MCF 10A (cell line): ENCODE measurements at regions of chr22 and their contacts with region 1.

Region 1: GRCh38 chr22:20156611-20157429 is 6.0 kb upstream of the CCDC188 start:
- DNase-seq: peak; percentile 66
- H3K4me3 Mint-ChIP-seq: no peak overlapping the region
- H3K27ac Mint-ChIP-seq: no peak overlapping the region
- H3K4me1 Mint-ChIP-seq: no peaks in the 10 kb centered on the region
- H3K27me3 Mint-ChIP-seq: no peaks in the 10 kb centered on the region
- CTCF ChIP-seq: peak; percentile 99

Region 2: GRCh38 chr22:20238536-20238900 is 81.7 kb after region 1 on chr22:
- CTCF ChIA-PET with region 1: interaction called, 8 read pairs
- POLR2A ChIA-PET with region 1: no interaction called
- intact Hi-C with region 1: loop called (anchors 2 kb)
- DNase-seq: peak; percentile 39
- H3K4me3 Mint-ChIP-seq: no peak overlapping the region
- H3K27ac Mint-ChIP-seq: no peak overlapping the region
- H3K4me1 Mint-ChIP-seq: no peaks in the 10 kb centered on the region
- H3K27me3 Mint-ChIP-seq: no peaks in the 10 kb centered on the region
- CTCF ChIP-seq: peak; percentile 44

Region 3: GRCh38 chr22:20268279-20269012 is 111.6 kb after region 1 on chr22 and contains the start of gene RTN4R:
- CTCF ChIA-PET with region 1: interaction called, 3 read pairs
- POLR2A ChIA-PET with region 1: no interaction called
- intact Hi-C with region 1: loop called (anchors 1 kb)
- DNase-seq: peak; percentile 58
- H3K4me3 Mint-ChIP-seq: peak within 1 kb of the TSS; percentile 59
- H3K27ac Mint-ChIP-seq: peak within 1 kb of the TSS; percentile 61
- H3K4me1 Mint-ChIP-seq: no peaks in the 10 kb centered on the region
- H3K27me3 Mint-ChIP-seq: no peaks in the 10 kb centered on the region
- CTCF ChIP-seq: peak; percentile 63
- total RNA-seq, gene RTN4R: 2.7 and 3.7 TPM in 2 replicates

Region 4: GRCh38 chr22:20283674-20284066 is 126.8 kb after region 1 on chr22:
- CTCF ChIA-PET with region 1: interaction called, 51 read pairs
- POLR2A ChIA-PET with region 1: interaction called, 4 read pairs
- intact Hi-C with region 1: loop called (anchors 1 kb)
- DNase-seq: no peak
- H3K4me3 Mint-ChIP-seq: no peak overlapping the region
- H3K27ac Mint-ChIP-seq: no peak overlapping the region
- H3K4me1 Mint-ChIP-seq: no peaks in the 10 kb centered on the region
- H3K27me3 Mint-ChIP-seq: peaks cover 11% of the 10 kb centered on the region
- CTCF ChIP-seq: no peak

Region 5: GRCh38 chr22:20456064-20456721 is 299.4 kb after region 1 on chr22:
- CTCF ChIA-PET with region 1: no interaction called
- POLR2A ChIA-PET with region 1: no interaction called
- intact Hi-C with region 1: loop called (anchors 2 kb)
- DNase-seq: peak; percentile 63
- H3K4me3 Mint-ChIP-seq: no peak overlapping the region
- H3K27ac Mint-ChIP-seq: no peak overlapping the region
- H3K4me1 Mint-ChIP-seq: no peaks in the 10 kb centered on the region
- H3K27me3 Mint-ChIP-seq: no peaks in the 10 kb centered on the region
- CTCF ChIP-seq: peak; percentile 55